CD14-positive monocyte (primary cell): ENCODE measurements at regions of chr18 and their contacts with region 1.

Region 1: GRCh38 chr18:3593904-3594661 is 144.1 kb downstream of the TGIF1 start:
- DNase-seq: peak; percentile 83 to 91 (median 85)
- H3K4me3 ChIP-seq: peak overlapping the region; percentile 47 to 71 (median 50)
- H3K4me3 Mint-ChIP-seq: peak overlapping the region; percentile 71 to 84
- H3K27ac ChIP-seq: peak overlapping the region; percentile 93 to 98
- H3K27ac Mint-ChIP-seq: peak overlapping the region; percentile 92 to 99 (median 96)
- H3K4me1 ChIP-seq: peaks cover 52 to 56% of the 10 kb centered on the region in 2 donors
- H3K4me1 Mint-ChIP-seq: peaks cover 46% of the 10 kb centered on the region
- H3K27me3 ChIP-seq: no peaks in the 10 kb centered on the region
- H3K27me3 Mint-ChIP-seq: peaks cover 0 to 5% (median 0%) of the 10 kb centered on the region in 3 donors
- CTCF ChIP-seq: peak; percentile 81

Region 2: DNA sequence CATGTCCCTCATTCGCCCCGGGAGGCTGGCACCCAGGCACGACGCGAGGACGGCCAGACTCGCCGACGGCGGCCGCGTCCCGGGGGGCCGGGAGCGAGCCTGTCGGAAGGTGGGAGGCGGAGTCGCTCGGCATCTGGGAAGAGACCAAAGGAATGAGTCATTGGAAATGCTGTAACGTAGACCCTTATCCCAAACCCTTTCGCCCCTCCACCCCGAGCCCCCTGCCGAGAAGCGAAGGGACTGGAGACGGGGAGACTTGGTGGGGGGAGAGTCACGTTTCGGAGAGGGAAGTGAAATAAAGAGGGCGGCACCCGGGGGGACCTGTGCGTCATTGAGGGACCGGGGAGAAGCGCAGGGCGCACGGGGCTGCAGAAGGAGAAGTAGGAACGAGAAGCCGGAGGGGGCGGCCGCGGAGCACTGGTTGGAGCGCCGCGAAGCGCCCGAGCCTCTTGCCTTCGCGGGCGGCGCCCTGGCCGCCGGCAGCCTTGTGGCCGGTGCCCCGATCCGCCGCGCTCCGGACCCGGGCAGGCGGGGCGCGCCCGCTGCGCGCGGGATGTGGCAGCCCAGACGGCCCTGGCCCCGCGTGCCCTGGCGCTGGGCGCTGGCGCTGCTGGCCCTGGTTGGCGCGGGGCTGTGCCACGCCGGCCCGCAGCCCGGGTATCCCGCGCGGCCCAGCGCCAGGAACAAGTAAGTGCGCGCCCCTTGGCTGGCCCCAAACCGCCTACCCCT is 747.3 kb before region 1 on chr18 and contains the start of gene EMILIN2:
- intact Hi-C with region 1: loop called (anchors 10 kb)
- DNase-seq: peak; percentile 93 to 96 (median 95)
- H3K4me3 ChIP-seq: peak within 1 kb of the TSS; percentile 97 to 99 (median 97)
- H3K4me3 Mint-ChIP-seq: peak within 1 kb of the TSS; percentile 96 to 97
- H3K27ac ChIP-seq: peak within 1 kb of the TSS; percentile 91 to 98
- H3K27ac Mint-ChIP-seq: peak within 1 kb of the TSS; percentile 95 to 99 (median 97)
- H3K4me1 ChIP-seq: peaks cover 65 to 73% of the 10 kb centered on the region in 2 donors
- H3K4me1 Mint-ChIP-seq: peaks cover 65% of the 10 kb centered on the region
- H3K27me3 ChIP-seq: no peaks in the 10 kb centered on the region
- H3K27me3 Mint-ChIP-seq: no peaks in the 10 kb centered on the region
- CTCF ChIP-seq: no peak
- polyA plus RNA-seq, gene EMILIN2: 30.5 to 43.2 (median 33.8) TPM

Region 3: DNA sequence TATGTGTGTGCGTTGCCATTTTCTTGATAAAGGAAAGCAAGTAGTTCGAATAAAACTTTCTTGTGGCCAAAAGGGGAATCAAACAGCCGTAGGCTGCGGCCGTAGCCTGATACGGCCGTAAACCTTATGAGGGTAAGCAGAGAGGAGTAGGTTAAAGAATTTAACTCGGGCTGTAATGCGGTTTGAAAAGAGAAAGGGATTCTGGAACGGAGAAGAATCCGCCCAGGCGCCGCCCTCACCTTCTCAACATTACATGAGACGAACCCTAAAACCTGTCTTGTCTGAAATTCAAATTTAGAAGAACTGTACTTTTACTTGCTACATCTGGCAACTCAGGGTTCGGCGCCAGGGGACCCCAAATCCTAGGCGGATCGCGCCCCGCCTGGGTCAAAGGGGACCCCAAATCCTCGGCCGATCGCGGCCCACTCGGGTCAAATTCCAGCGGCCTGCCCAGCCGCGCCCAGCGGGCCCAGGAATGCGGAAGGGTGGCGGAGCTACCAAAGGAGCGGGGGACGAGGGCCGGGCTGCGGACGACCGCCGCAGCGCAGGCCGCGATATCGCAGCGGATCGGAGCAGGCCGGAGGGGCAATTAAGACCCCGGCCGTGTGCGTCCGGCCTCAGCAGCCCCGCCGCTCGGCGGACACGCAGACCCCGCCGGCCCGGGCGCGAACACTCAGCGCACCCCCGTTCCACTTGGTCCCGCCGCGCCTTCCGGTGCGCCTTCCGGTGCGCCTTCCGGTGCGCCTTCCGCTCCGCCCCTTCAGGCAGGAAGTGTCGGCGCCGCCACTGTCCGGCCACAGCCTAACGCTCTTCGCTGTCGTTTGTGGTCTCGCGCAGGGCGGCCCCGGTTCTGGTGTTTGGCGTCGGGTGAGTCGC is 332.5 kb before region 1 on chr18 and contains the start of gene MYL12B:
- intact Hi-C with region 1: loop called (anchors 5 to 10 kb)
- DNase-seq: peak; percentile 79 to 84 (median 83)
- H3K4me3 ChIP-seq: peak within 1 kb of the TSS; percentile 64 to 84 (median 80)
- H3K4me3 Mint-ChIP-seq: peak within 1 kb of the TSS; percentile 82 to 96
- H3K27ac ChIP-seq: peak within 1 kb of the TSS; percentile 83 to 90
- H3K27ac Mint-ChIP-seq: peak within 1 kb of the TSS; percentile 96 to 99 (median 98)
- H3K4me1 ChIP-seq: peaks cover 47 to 58% of the 10 kb centered on the region in 2 donors
- H3K4me1 Mint-ChIP-seq: peaks cover 62% of the 10 kb centered on the region
- H3K27me3 ChIP-seq: no peaks in the 10 kb centered on the region
- H3K27me3 Mint-ChIP-seq: no peaks in the 10 kb centered on the region
- CTCF ChIP-seq: no peak
- polyA plus RNA-seq, gene MYL12B: 295 to 814 (median 727) TPM

Region 4: DNA sequence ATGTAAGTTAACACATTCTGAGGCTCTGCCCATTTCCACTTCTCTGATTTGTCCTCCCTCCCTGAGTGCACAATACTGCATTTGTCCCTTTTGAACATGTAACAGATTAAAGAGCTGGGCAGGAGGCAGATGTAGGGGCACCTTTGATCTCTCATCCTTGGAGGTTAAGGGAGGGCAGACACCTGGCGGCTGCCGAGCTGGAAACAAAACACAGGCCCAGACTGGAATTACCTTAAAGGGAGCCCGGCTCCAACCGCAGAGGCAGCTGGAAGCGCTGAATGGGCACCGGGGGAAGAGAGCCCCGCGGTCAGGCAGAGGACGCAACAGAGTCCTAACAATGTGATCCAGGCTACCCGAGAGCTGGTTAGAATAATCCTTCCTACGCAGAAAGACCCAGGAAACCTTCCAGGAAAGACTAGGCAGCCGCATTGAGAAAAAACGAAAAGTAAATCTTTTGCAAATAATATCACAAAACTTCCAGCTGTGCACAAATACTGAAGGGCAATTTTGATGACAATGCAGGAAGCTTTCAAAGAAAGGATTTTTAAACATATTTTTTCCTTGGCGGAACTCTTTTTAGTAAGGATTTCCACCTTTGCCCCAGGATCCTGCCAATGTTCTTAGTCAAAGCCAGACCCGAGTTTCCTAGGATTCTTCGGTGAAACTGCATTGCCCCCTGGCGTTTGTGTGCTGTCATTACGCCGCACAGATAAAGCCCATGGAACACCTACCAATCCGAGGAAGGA is 71.9 kb after region 1 on chr18:
- intact Hi-C with region 1: loop called in 1 of 2 experiments (anchors 5 kb)
- DNase-seq: peak; percentile 68 to 80 (median 77)
- H3K4me3 ChIP-seq: peak overlapping the region in 1 of 3 experiments; percentile 54
- H3K4me3 Mint-ChIP-seq: peak overlapping the region; percentile 71 to 89
- H3K27ac ChIP-seq: no peak overlapping the region
- H3K27ac Mint-ChIP-seq: peak overlapping the region in 4 of 7 donors; percentile 21 to 61 (median 50)
- H3K4me1 ChIP-seq: peaks cover 33 to 42% of the 10 kb centered on the region in 2 donors
- H3K4me1 Mint-ChIP-seq: peaks cover 36% of the 10 kb centered on the region
- H3K27me3 ChIP-seq: no peaks in the 10 kb centered on the region
- H3K27me3 Mint-ChIP-seq: peaks cover 0 to 3% (median 0%) of the 10 kb centered on the region in 3 donors
- CTCF ChIP-seq: peak; percentile 96

Region 5: GRCh38 chr18:3679241-3679640 is 85.2 kb after region 1 on chr18:
- intact Hi-C with region 1: no loop called
- DNase-seq: peak; percentile 62 to 75 (median 73)
- H3K4me3 ChIP-seq: no peak overlapping the region
- H3K4me3 Mint-ChIP-seq: no peak overlapping the region
- H3K27ac ChIP-seq: peak overlapping the region; percentile 48 to 57
- H3K27ac Mint-ChIP-seq: peak overlapping the region; percentile 73 to 90 (median 83)
- H3K4me1 ChIP-seq: peaks cover 18 to 19% of the 10 kb centered on the region in 2 donors
- H3K4me1 Mint-ChIP-seq: peaks cover 26% of the 10 kb centered on the region
- H3K27me3 ChIP-seq: no peaks in the 10 kb centered on the region
- H3K27me3 Mint-ChIP-seq: peaks cover 0 to 3% (median 2%) of the 10 kb centered on the region in 3 donors
- CTCF ChIP-seq: no peak

Region 6: DNA sequence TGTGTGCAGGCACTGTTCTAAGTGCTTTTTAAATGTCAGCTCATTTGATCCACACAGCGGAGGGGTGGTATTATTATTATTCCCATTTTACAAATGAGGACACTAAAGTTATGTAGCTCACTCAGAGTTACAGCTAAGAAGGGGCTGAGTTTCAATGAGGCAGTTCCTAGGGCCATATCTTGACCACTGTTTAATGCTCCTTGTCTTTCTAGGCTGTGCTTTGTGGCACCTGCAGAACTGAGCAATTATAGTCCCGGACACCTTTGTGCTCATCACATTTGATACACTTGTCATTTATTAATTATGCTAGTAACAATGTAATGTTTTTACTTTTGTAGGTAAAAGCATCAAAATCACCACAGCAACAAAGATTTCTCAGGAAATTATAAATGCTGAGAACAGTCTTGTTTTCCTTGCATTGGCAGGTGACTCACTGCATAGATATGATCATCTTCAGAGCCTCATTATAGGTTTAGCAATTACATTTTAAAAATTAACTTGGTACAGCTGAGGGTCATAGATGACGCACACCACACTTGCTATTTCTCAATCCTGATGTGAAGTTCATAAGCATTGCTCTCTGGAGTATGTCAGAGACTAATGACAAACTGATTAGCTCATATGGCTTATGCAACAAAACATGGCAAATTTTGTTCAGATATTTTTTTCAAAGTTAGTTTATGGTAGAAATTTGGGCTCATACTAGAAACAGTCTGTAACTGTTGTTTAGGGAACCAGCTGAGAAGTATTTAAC is 222.7 kb after region 1 on chr18:
- intact Hi-C with region 1: no loop called
- DNase-seq: peak; percentile 27 to 65 (median 29)
- H3K4me3 ChIP-seq: no peak overlapping the region
- H3K4me3 Mint-ChIP-seq: no peak overlapping the region
- H3K27ac ChIP-seq: no peak overlapping the region
- H3K27ac Mint-ChIP-seq: no peak overlapping the region
- H3K4me1 ChIP-seq: no peaks in the 10 kb centered on the region
- H3K4me1 Mint-ChIP-seq: no peaks in the 10 kb centered on the region
- H3K27me3 ChIP-seq: no peaks in the 10 kb centered on the region
- H3K27me3 Mint-ChIP-seq: no peaks in the 10 kb centered on the region
- CTCF ChIP-seq: no peak